Right ventricle myocardium inferior (tissue), 1 donor: ENCODE measurements at regions of chr16 and their contacts with region 1.

Region 1: GRCh38 chr16:53435066-53435688 is 906 bp downstream of the RBL2 start:
- DNase-seq: peak; percentile 76
- ATAC-seq: peak; percentile 93

Region 2: DNA sequence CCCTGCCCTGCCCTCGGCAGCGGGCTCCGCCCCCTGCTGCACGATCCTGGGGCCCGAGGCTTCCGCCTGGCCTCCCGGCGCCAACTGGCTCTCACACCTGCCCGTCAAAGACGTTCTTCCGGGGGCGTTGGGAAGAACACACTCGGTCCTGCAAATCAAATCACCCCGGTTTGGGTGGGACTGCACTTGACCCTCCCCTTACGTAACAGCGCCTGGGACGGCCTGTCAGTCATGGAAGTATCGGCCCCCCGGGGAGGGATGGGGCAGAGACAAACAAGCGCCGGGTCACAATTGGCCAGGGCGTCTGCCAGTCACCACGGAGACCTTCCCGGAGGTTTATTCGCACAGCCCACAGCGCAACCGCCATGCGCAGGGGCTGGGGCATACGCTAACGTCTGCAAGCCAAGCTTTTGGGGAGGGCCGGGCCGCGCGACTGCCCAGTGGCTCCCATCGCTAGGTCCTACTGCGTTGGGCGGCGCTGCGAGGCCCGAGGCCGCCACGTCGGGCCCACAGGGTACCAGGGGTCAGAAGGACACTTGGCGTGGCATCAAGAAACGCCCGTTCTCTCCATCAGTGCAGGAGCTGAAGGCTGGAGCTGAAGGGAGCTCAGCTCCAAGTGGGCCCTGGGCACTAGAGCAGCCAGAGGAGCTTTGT is 68.2 kb after region 1 on chr16:
- intact Hi-C with region 1: loop called (anchors 2 kb)
- DNase-seq: peak; percentile 100
- ATAC-seq: peak; percentile 94

Region 3: GRCh38 chr16:53509906-53510703 is 74.9 kb after region 1 on chr16:
- intact Hi-C with region 1: loop called (anchors 1 kb)
- DNase-seq: peak; percentile 90
- ATAC-seq: peak; percentile 81